A673 (cell line): ENCODE measurements at regions of chr2 and their contacts with region 1.

Region 1: GRCh38 chr2:120735746-120736170 is at the start of gene GLI2:
- DNase-seq: peak; percentile 94
- H3K4me3 ChIP-seq: peak within 1 kb of the TSS; percentile 70
- H3K27ac ChIP-seq: peak within 1 kb of the TSS; percentile 80
- H3K4me1 ChIP-seq: peaks cover 32% of the 10 kb centered on the region
- H3K27me3 ChIP-seq: no peaks in the 10 kb centered on the region
- CTCF ChIP-seq: peak; percentile 75
- total RNA-seq, gene GLI2: 8.1 and 10.4 TPM in 2 replicates

Region 2: DNA sequence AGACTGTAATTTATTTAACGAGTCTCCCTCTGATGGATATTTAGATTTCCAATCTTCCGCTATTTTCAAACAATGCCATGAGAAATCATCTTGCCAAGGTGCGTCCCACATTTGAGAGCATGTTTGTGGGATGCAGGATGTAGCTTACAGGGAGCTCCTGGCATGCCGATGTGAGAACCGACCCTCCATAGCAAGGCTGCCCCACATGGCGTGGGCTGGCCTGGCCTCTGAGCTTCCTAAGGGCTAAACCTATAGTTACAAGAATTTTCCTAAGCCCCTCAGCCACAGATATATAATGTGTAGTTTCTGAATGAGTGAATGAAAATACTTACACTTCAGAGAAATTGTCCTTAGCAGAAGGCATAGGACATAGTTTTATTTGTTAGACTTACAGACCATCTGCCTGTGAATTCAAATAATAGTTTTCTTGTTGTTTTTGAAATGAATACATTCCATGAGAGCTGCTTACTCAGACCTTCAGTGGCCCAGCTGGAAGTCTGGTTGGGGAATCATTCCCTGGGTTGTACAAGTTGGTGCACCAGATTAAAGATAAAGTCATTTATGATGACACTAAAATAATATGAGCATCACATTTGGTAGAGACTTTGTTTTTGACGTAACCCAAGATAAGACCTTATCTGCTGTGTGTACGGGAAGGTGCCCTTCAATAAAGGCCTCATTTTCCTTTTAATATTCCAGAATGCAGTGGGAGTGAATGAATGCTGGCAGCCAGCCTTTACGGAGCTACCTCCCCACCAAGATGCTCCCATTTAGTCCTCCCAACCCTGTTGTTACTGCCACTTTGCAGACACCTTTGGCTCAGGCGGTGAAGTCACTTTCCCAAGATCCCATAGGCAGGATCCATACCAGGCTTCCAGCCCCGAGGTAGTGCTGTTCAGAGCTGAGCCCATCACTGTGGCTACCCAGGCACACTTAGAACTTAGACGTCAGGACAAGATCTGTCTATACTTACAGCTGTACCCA is 107.0 kb after region 1 on chr2:
- CTCF ChIA-PET with region 1: no interaction called
- POLR2A ChIA-PET with region 1: no interaction called
- intact Hi-C with region 1: no loop called
- DNase-seq: no peak
- H3K4me3 ChIP-seq: no peak overlapping the region
- H3K27ac ChIP-seq: no peak overlapping the region
- H3K4me1 ChIP-seq: peaks cover 9% of the 10 kb centered on the region
- H3K27me3 ChIP-seq: no peaks in the 10 kb centered on the region
- CTCF ChIP-seq: no peak

Region 3: DNA sequence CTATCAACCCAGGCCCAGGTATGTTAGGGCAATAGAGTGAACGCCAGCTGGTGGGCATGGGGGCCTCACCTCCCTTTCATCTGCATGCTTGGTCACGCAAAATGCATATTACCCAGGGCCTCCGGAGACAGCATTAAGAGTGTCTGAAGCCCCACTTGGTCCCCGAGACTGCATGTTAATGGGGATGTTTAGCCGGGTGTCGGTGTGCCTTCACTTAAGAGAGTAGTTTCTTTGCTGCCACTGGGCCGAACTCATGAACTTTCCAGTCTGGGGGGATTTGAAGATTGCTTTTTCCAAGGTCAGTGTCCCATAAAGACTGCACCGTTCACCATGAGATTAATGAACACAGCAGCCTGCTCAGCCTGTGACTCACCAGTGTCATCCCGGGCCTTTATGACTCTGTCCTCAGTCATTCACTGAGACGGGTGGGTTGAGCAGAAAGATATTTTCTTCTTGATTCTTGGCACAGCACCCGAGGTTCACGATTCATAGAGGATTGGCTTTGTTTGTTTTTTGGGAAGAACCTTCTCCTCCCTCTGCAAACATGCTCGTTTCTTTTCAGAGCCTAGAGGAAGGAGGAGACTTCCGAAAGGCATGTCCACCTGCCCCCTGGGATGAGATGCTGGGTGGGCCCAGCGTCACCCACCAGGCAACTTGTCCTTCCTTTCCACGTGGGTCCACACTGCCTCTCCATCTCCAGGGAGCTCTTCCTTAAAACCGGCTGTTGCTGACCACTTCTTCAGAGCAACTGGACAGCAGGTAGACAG is 199.0 kb after region 1 on chr2:
- CTCF ChIA-PET with region 1: no interaction called
- POLR2A ChIA-PET with region 1: no interaction called
- intact Hi-C with region 1: loop called (anchors 10 kb)
- DNase-seq: peak; percentile 48
- H3K4me3 ChIP-seq: no peak overlapping the region
- H3K27ac ChIP-seq: no peak overlapping the region
- H3K4me1 ChIP-seq: peaks cover 12% of the 10 kb centered on the region
- H3K27me3 ChIP-seq: no peaks in the 10 kb centered on the region
- CTCF ChIP-seq: no peak

Region 4: GRCh38 chr2:122421775-122422174 is 1686.0 kb after region 1 on chr2:
- CTCF ChIA-PET with region 1: no interaction called
- POLR2A ChIA-PET with region 1: no interaction called
- intact Hi-C with region 1: no loop called
- DNase-seq: peak; percentile 43
- H3K4me3 ChIP-seq: no peak overlapping the region
- H3K27ac ChIP-seq: peak overlapping the region; percentile 28
- H3K4me1 ChIP-seq: peaks cover 27% of the 10 kb centered on the region
- H3K27me3 ChIP-seq: no peaks in the 10 kb centered on the region
- CTCF ChIP-seq: no peak